CD8-positive, alpha-beta T cell (primary cell): ENCODE measurements at regions of chr15 and their contacts with region 1.

Region 1: GRCh38 chr15:74842581-74843444 is at the start of gene ULK3:
- DNase-seq: peak; percentile 88 to 96 (median 92)
- ATAC-seq: peak; percentile 92
- H3K4me3 ChIP-seq: peak within 1 kb of the TSS; percentile 90 to 97
- H3K4me3 Mint-ChIP-seq: peak within 1 kb of the TSS; percentile 91
- H3K27ac ChIP-seq: peak within 1 kb of the TSS; percentile 72 to 78
- H3K27ac Mint-ChIP-seq: peak within 1 kb of the TSS; percentile 93
- H3K4me1 ChIP-seq: peaks cover 43% of the 10 kb centered on the region
- H3K4me1 Mint-ChIP-seq: peaks cover 48% of the 10 kb centered on the region
- H3K27me3 ChIP-seq: no peaks in the 10 kb centered on the region
- H3K27me3 Mint-ChIP-seq: no peaks in the 10 kb centered on the region
- CTCF ChIP-seq: peak; percentile 71
- total RNA-seq, gene ULK3: 34.3 to 35.1 TPM

Region 2: DNA sequence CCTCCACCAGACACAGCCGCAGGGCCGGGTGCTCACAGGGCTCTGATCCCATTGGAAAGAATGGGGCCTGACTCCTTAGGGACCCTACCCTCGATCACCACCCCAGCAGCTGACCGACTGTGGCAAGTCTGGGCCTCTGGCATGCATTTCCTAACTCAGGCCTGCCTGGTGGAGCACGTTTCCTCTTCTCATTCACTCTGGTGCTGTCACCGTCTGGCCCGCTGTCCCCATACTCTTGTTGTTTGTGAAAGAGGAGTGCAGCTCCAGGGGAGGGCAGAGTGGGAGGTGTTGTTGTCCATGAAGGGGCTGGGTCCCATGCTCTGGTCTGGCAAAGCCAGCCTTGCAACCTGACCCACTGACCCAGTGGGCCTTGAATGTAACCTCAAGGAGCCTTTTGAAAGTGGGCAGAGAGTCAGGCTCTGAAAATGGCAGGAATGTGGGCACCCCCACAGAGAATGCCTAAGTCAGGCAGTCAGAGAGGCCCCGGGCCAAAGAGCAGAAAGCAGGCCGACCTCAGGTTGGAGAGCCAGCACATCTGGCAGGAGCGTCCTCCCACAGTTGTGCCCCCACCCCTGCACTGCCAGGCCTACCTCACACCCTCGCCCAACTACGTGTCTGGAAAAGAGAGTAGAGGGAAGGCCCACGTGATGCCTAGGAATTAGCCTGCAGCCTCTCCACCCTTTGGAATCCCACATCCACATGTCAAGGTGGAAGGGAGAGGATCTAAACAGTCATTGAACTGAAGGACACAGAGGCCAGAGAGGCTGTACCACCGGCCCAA is 420.0 kb before region 1 on chr15:
- CTCF ChIA-PET with region 1: no interaction called
- POLR2A ChIA-PET with region 1: no interaction called
- intact Hi-C with region 1: no loop called
- DNase-seq: no peak
- ATAC-seq: no peak
- H3K4me3 ChIP-seq: no peak overlapping the region
- H3K4me3 Mint-ChIP-seq: no peak overlapping the region
- H3K27ac ChIP-seq: no peak overlapping the region
- H3K27ac Mint-ChIP-seq: no peak overlapping the region
- H3K4me1 ChIP-seq: peaks cover 8% of the 10 kb centered on the region
- H3K4me1 Mint-ChIP-seq: peaks cover 23% of the 10 kb centered on the region
- H3K27me3 ChIP-seq: no peaks in the 10 kb centered on the region
- H3K27me3 Mint-ChIP-seq: no peaks in the 10 kb centered on the region
- CTCF ChIP-seq: no peak

Region 3: GRCh38 chr15:74781431-74782258 is 61.2 kb before region 1 on chr15 and contains the start of gene CSK:
- CTCF ChIA-PET with region 1: interaction called, 14 read pairs
- POLR2A ChIA-PET with region 1: no interaction called
- intact Hi-C with region 1: loop called (anchors 2 kb)
- DNase-seq: peak; percentile 56 to 92 (median 79)
- ATAC-seq: peak; percentile 63
- H3K4me3 ChIP-seq: peak within 1 kb of the TSS; percentile 93 to 98
- H3K4me3 Mint-ChIP-seq: peak within 1 kb of the TSS; percentile 85
- H3K27ac ChIP-seq: peak within 1 kb of the TSS; percentile 74 to 90
- H3K27ac Mint-ChIP-seq: peak within 1 kb of the TSS; percentile 93
- H3K4me1 ChIP-seq: peaks cover 70% of the 10 kb centered on the region
- H3K4me1 Mint-ChIP-seq: peaks cover 66% of the 10 kb centered on the region
- H3K27me3 ChIP-seq: no peaks in the 10 kb centered on the region
- H3K27me3 Mint-ChIP-seq: no peaks in the 10 kb centered on the region
- CTCF ChIP-seq: peak; percentile 56
- total RNA-seq, gene CSK: 99.5 to 118 TPM

Region 4: DNA sequence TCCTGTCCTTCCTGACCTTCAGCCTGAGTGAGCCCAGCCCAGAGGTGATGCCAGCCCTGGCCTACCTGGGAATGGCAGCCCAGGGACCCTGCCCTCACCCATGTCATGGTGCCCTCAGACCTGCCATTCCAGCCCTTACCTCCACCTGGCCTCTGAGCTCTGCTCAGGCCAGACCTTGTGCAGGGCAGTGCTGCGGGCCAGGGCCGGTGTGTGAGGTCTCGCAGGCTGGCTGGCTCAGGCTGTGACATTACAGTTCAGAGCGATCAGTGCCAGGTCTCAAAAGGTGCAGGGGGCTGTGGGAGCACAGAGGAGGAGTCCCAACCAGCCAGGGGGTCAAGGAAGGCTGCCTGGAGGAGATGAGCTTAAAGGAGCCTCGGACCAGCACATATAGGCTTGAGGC is 22.8 kb before region 1 on chr15:
- CTCF ChIA-PET with region 1: no interaction called
- POLR2A ChIA-PET with region 1: no interaction called
- intact Hi-C with region 1: no loop called
- DNase-seq: no peak
- ATAC-seq: no peak
- H3K4me3 ChIP-seq: no peak overlapping the region
- H3K4me3 Mint-ChIP-seq: no peak overlapping the region
- H3K27ac ChIP-seq: no peak overlapping the region
- H3K27ac Mint-ChIP-seq: no peak overlapping the region
- H3K4me1 ChIP-seq: peaks cover 7% of the 10 kb centered on the region
- H3K4me1 Mint-ChIP-seq: peaks cover 7% of the 10 kb centered on the region
- H3K27me3 ChIP-seq: no peaks in the 10 kb centered on the region
- H3K27me3 Mint-ChIP-seq: peaks cover 7% of the 10 kb centered on the region
- CTCF ChIP-seq: no peak

Region 5: GRCh38 chr15:74873036-74873755 is 30.4 kb after region 1 on chr15 and contains the start of gene SCAMP2:
- CTCF ChIA-PET with region 1: interaction called, 10 read pairs
- POLR2A ChIA-PET with region 1: interaction called, 16 read pairs
- intact Hi-C with region 1: loop called (anchors 1 kb)
- DNase-seq: peak; percentile 82 to 96 (median 90)
- ATAC-seq: peak; percentile 93
- H3K4me3 ChIP-seq: peak within 1 kb of the TSS; percentile 84 to 96
- H3K4me3 Mint-ChIP-seq: peak within 1 kb of the TSS; percentile 98
- H3K27ac ChIP-seq: peak within 1 kb of the TSS; percentile 87 to 95
- H3K27ac Mint-ChIP-seq: peak within 1 kb of the TSS; percentile 95
- H3K4me1 ChIP-seq: peaks cover 43% of the 10 kb centered on the region
- H3K4me1 Mint-ChIP-seq: peaks cover 45% of the 10 kb centered on the region
- H3K27me3 ChIP-seq: no peaks in the 10 kb centered on the region
- H3K27me3 Mint-ChIP-seq: no peaks in the 10 kb centered on the region
- CTCF ChIP-seq: no peak
- total RNA-seq, gene SCAMP2: 48.7 to 57.2 TPM

Region 6: GRCh38 chr15:74950078-74951000 is 107.5 kb after region 1 on chr15:
- CTCF ChIA-PET with region 1: interaction called, 23 read pairs
- POLR2A ChIA-PET with region 1: no interaction called
- intact Hi-C with region 1: loop called (anchors 2 kb)
- DNase-seq: peak; percentile 65 to 84 (median 79)
- ATAC-seq: peak; percentile 99
- H3K4me3 ChIP-seq: no peak overlapping the region
- H3K4me3 Mint-ChIP-seq: no peak overlapping the region
- H3K27ac ChIP-seq: no peak overlapping the region
- H3K27ac Mint-ChIP-seq: no peak overlapping the region
- H3K4me1 ChIP-seq: no peaks in the 10 kb centered on the region
- H3K4me1 Mint-ChIP-seq: peaks cover 6% of the 10 kb centered on the region
- H3K27me3 ChIP-seq: peaks cover 0 to 2% of the 10 kb centered on the region in 2 experiments
- H3K27me3 Mint-ChIP-seq: no peaks in the 10 kb centered on the region
- CTCF ChIP-seq: peak; percentile 94

Region 7: GRCh38 chr15:75639709-75640482 is 797.1 kb after region 1 on chr15 and contains the start of gene IMP3:
- CTCF ChIA-PET with region 1: no interaction called
- POLR2A ChIA-PET with region 1: no interaction called
- intact Hi-C with region 1: no loop called
- DNase-seq: peak; percentile 81 to 98 (median 94)
- ATAC-seq: peak; percentile 90
- H3K4me3 ChIP-seq: peak within 1 kb of the TSS; percentile 80 to 99
- H3K4me3 Mint-ChIP-seq: peak within 1 kb of the TSS; percentile 91
- H3K27ac ChIP-seq: peak within 1 kb of the TSS; percentile 79 to 98
- H3K27ac Mint-ChIP-seq: peak within 1 kb of the TSS; percentile 97
- H3K4me1 ChIP-seq: peaks cover 31% of the 10 kb centered on the region
- H3K4me1 Mint-ChIP-seq: peaks cover 41% of the 10 kb centered on the region
- H3K27me3 ChIP-seq: no peaks in the 10 kb centered on the region
- H3K27me3 Mint-ChIP-seq: no peaks in the 10 kb centered on the region
- CTCF ChIP-seq: no peak
- total RNA-seq, gene IMP3: 67.1 to 69.5 TPM